ENCODE measurements at regions of chr2 and their contacts with region 1.

Region 1: GRCh38 chr2:181197140-181197760 is 216.8 kb downstream of the UBE2E3 start:
- DNase-seq: peak; percentile 58
- ATAC-seq: peak; percentile 73
- H3K4me3 Mint-ChIP-seq: peak overlapping the region; percentile 52
- H3K27ac Mint-ChIP-seq: peak overlapping the region; percentile 95
- H3K4me1 Mint-ChIP-seq: peaks cover 74% of the 10 kb centered on the region
- H3K27me3 Mint-ChIP-seq: no peaks in the 10 kb centered on the region

Region 2: DNA sequence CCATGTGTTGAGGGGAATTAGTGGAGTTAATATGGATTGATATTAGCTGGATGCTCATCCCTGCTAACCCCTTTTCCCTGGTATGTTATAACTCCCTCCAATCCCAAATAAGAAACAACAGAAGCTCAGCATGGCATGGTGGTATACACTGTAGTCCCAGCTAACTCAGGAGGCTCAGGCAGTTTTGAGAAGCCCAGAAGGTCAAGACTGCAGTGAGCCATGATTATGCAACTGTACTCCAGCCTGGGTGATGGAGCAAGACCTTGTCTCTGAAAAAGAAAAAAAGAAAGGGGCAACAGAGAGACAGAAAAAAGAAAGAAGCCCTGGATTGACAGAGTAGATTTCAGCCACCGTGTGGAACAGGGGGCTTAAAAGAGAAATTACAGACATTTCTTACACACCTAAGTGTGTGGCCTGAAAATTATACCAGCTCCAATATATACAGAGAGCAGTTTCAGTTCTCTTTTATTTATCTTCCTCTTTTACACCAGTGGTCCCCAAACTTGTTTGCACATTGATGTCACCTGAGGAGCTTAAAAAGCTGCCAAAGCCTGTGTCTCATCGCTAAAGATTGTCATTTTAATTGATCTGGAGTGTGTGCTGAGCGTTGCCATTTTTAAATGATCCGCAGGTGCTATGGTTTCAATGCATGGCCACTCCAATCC is 13.2 kb before region 1 on chr2:
- CTCF ChIA-PET with region 1: interaction called, 25 read pairs
- DNase-seq: no peak
- ATAC-seq: peak; percentile 12
- H3K4me3 Mint-ChIP-seq: no peak overlapping the region
- H3K27ac Mint-ChIP-seq: peak overlapping the region; percentile 35
- H3K4me1 Mint-ChIP-seq: peaks cover 50% of the 10 kb centered on the region
- H3K27me3 Mint-ChIP-seq: no peaks in the 10 kb centered on the region